GM12878 (cell line): ENCODE measurements at regions of chr17 and their contacts with region 1.

Region 1: GRCh38 chr17:68435876-68436842 is 21.1 kb downstream of the WIPI1 start:
- DNase-seq: no peak
- ATAC-seq: peak; percentile 83
- H3K4me3 ChIP-seq: no peak overlapping the region
- H3K27ac ChIP-seq: no peak overlapping the region
- H3K4me1 ChIP-seq: peaks cover 33% of the 10 kb centered on the region
- H3K27me3 ChIP-seq: no peaks in the 10 kb centered on the region
- CTCF ChIP-seq: peak; percentile 90 to 97 (median 96)
- EP300 ChIP-seq: no peak
- POLR2A ChIP-seq: no peak
- RAD21 ChIP-seq: peak; percentile 82

Region 2: GRCh38 chr17:68184816-68185436 is 251.2 kb before region 1 on chr17:
- CTCF ChIA-PET with region 1: interaction called, 12 read pairs
- POLR2A ChIA-PET with region 1: no interaction called
- RAD21 ChIA-PET with region 1: interaction called, 6 read pairs
- SMC1A ChIA-PET with region 1: interaction called, 3 read pairs
- in situ Hi-C with region 1: no loop called
- intact Hi-C with region 1: no loop called
- DNase-seq: no peak
- ATAC-seq: peak; percentile 74
- H3K4me3 ChIP-seq: peak overlapping the region; percentile 50; the same call in 1 of the 2 replicates
- H3K27ac ChIP-seq: peak overlapping the region; percentile 78
- H3K4me1 ChIP-seq: peaks cover 34% of the 10 kb centered on the region
- H3K27me3 ChIP-seq: no peaks in the 10 kb centered on the region
- CTCF ChIP-seq: no peak
- EP300 ChIP-seq: no peak
- POLR2A ChIP-seq: no peak
- RAD21 ChIP-seq: no peak

Region 3: GRCh38 chr17:68255731-68256538 is 180.2 kb before region 1 on chr17:
- CTCF ChIA-PET with region 1: interaction called, 72 read pairs
- POLR2A ChIA-PET with region 1: no interaction called
- RAD21 ChIA-PET with region 1: interaction called, 4 read pairs
- SMC1A ChIA-PET with region 1: interaction called, 5 read pairs
- in situ Hi-C with region 1: loop called (anchors 10 kb)
- intact Hi-C with region 1: no loop called
- DNase-seq: no peak
- ATAC-seq: peak; percentile 57
- H3K4me3 ChIP-seq: no peak overlapping the region
- H3K27ac ChIP-seq: no peak overlapping the region
- H3K4me1 ChIP-seq: peaks cover 7% of the 10 kb centered on the region; the same call in 1 of the 2 replicates
- H3K27me3 ChIP-seq: no peaks in the 10 kb centered on the region
- CTCF ChIP-seq: no peak
- EP300 ChIP-seq: no peak
- POLR2A ChIP-seq: no peak
- RAD21 ChIP-seq: no peak

Region 4: GRCh38 chr17:68398691-68399637 is 37.2 kb before region 1 on chr17:
- CTCF ChIA-PET with region 1: interaction called, 24 read pairs
- POLR2A ChIA-PET with region 1: no interaction called
- RAD21 ChIA-PET with region 1: interaction called, 3 read pairs
- SMC1A ChIA-PET with region 1: interaction called, 11 read pairs
- in situ Hi-C with region 1: no loop called
- intact Hi-C with region 1: no loop called
- DNase-seq: no peak
- ATAC-seq: peak; percentile 99
- H3K4me3 ChIP-seq: no peak overlapping the region
- H3K27ac ChIP-seq: no peak overlapping the region
- H3K4me1 ChIP-seq: peaks cover 6% of the 10 kb centered on the region
- H3K27me3 ChIP-seq: no peaks in the 10 kb centered on the region
- CTCF ChIP-seq: peak; percentile 84 to 89 (median 88)
- EP300 ChIP-seq: no peak
- POLR2A ChIP-seq: peak; percentile 34; the same call in 1 of the 2 replicates
- RAD21 ChIP-seq: peak; percentile 82

Region 5: GRCh38 chr17:68424942-68425386 is 11.2 kb before region 1 on chr17:
- CTCF ChIA-PET with region 1: interaction called, 11 read pairs
- POLR2A ChIA-PET with region 1: no interaction called
- RAD21 ChIA-PET with region 1: no interaction called
- SMC1A ChIA-PET with region 1: no interaction called
- in situ Hi-C with region 1: no loop called
- intact Hi-C with region 1: no loop called
- DNase-seq: no peak
- ATAC-seq: no peak
- H3K4me3 ChIP-seq: no peak overlapping the region
- H3K27ac ChIP-seq: no peak overlapping the region
- H3K4me1 ChIP-seq: no peaks in the 10 kb centered on the region
- H3K27me3 ChIP-seq: no peaks in the 10 kb centered on the region
- CTCF ChIP-seq: no peak
- EP300 ChIP-seq: no peak
- POLR2A ChIP-seq: no peak
- RAD21 ChIP-seq: no peak

Region 6: DNA sequence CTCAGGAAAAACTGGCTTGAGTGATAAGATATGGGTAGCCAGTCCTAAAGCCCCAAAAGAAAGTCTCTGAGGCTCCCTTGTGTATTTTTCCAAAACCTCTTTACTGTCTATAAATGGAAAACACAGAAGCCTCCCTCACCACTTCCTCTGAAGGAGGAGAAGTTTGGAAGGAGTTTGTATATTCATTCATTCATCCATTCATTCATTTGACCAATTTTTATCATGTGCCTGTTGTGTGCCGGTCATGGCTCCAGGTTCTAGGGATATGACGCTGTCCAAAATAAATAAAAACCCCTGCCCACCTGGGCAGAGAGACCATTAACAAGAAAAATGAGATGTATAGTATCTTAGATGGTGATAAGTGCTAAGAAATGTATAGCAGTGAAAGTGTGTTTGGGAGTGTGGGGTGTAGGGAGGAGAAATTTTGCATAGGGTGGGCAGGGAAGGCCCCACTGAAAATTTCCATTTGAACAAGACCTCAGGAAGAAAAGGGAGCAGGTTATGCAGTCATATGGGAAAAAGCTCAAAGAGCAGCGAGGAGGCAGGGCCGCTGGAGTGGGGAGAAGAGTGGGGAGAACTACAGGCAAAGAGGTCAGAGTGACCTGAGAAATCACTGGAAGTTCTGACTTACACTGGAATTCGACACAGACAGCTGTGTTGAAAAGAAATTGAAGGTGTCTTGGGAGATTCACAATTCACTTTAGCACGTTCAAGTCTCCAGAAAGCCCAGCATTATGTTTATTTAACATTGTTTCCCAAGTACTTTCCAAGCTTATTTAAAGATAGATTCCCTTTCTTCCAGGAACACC is 27.3 kb after region 1 on chr17:
- CTCF ChIA-PET with region 1: interaction called, 222 read pairs
- POLR2A ChIA-PET with region 1: interaction called, 23 read pairs
- RAD21 ChIA-PET with region 1: interaction called, 157 read pairs
- SMC1A ChIA-PET with region 1: interaction called, 288 read pairs
- in situ Hi-C with region 1: no loop called
- intact Hi-C with region 1: loop called (anchors 1 kb)
- DNase-seq: no peak
- ATAC-seq: no peak
- H3K4me3 ChIP-seq: no peak overlapping the region
- H3K27ac ChIP-seq: no peak overlapping the region; the same call in 1 of the 2 replicates
- H3K4me1 ChIP-seq: peaks cover 37% of the 10 kb centered on the region
- H3K27me3 ChIP-seq: no peaks in the 10 kb centered on the region
- CTCF ChIP-seq: no peak
- EP300 ChIP-seq: no peak
- POLR2A ChIP-seq: no peak
- RAD21 ChIP-seq: no peak

Region 7: GRCh38 chr17:68527323-68527722 is 91.2 kb after region 1 on chr17:
- CTCF ChIA-PET with region 1: no interaction called
- POLR2A ChIA-PET with region 1: no interaction called
- RAD21 ChIA-PET with region 1: no interaction called
- SMC1A ChIA-PET with region 1: no interaction called
- in situ Hi-C with region 1: no loop called
- intact Hi-C with region 1: no loop called
- DNase-seq: no peak
- ATAC-seq: no peak
- H3K4me3 ChIP-seq: no peak overlapping the region
- H3K27ac ChIP-seq: no peak overlapping the region
- H3K4me1 ChIP-seq: no peaks in the 10 kb centered on the region
- H3K27me3 ChIP-seq: no peaks in the 10 kb centered on the region
- CTCF ChIP-seq: no peak
- EP300 ChIP-seq: no peak
- POLR2A ChIP-seq: no peak
- RAD21 ChIP-seq: no peak